PC-3 (cell line): ENCODE measurements at regions of chr1 and their contacts with region 1.

Region 1: DNA sequence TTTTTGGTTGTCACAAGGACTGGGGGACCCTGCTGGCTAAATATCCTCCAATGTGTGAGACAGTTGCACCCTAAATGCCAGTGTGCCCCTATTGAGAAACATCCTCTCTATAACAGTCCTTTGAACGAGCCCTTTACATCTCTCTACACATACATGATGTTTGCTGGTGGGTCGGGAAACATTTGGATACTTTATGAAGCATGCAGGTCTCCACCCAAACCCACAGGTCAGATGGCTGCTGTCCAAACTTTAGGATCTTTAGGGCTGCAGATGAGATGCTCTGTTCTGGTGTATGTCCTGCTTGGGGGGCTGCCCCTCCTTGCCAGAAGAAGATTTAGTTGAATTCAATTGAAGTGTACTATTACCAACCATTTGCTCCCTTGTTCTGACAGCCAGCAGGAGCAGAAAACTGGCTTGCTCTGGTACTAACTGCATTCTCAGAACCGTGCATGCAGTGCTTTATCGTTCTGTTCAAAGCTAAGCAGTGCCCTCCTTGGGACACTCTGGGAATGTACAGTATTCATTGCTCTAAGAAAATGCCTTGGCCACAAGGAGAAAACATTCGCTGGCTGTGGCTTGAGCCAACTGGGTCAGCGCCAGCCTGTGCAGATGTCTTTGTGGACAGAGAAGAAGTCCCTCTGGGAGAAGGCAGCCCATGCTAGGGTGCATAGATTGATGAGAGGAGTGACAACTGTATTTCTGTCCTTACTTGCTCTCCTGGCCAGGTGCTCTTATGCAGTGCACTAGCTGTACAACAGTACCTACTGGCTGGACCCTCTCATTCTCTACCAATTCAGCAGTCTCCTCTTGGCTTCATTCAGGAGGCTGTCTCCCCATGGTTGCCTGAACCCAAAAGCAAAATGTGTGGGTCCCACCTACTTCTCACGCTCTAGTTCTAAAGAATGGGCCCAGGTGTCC is 61.4 kb upstream of the DIRAS3 start:
- DNase-seq: peak; percentile 79
- ATAC-seq: peak; percentile 72
- H3K4me3 ChIP-seq: no peak overlapping the region
- H3K27ac ChIP-seq: no peak overlapping the region
- H3K4me1 ChIP-seq: peaks cover 29% of the 10 kb centered on the region
- H3K27me3 ChIP-seq: no peaks in the 10 kb centered on the region
- CTCF ChIP-seq: peak; percentile 88

Region 2: DNA sequence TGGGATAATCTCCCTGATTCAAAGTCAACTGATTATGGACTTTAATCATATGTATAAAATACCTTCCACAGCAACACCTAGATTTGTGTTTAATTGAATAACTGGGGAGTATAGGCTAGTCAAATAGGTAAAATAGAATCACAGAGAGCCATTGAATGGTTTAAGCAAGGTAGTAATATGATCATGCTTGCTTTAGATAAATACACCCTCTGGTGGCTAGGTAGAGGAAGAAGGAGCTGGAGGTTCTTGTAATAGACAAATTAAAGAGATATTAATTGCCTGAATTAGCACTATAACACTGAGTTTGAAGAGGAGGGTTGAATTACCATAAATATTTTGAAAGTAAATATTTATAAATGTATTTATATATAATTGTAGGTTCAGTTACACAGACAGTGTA is 101.7 kb before region 1 on chr1:
- CTCF ChIA-PET with region 1: interaction called, 4 read pairs
- POLR2A ChIA-PET with region 1: no interaction called
- intact Hi-C with region 1: loop called (anchors 2 kb)
- DNase-seq: peak; percentile 53
- ATAC-seq: peak; percentile 82
- H3K4me3 ChIP-seq: no peak overlapping the region
- H3K27ac ChIP-seq: no peak overlapping the region
- H3K4me1 ChIP-seq: no peaks in the 10 kb centered on the region
- H3K27me3 ChIP-seq: no peaks in the 10 kb centered on the region
- CTCF ChIP-seq: peak; percentile 73

Region 3: GRCh38 chr1:68057564-68057963 is 54.2 kb before region 1 on chr1:
- CTCF ChIA-PET with region 1: no interaction called
- POLR2A ChIA-PET with region 1: no interaction called
- intact Hi-C with region 1: no loop called
- DNase-seq: no peak
- ATAC-seq: no peak
- H3K4me3 ChIP-seq: no peak overlapping the region
- H3K27ac ChIP-seq: no peak overlapping the region
- H3K4me1 ChIP-seq: no peaks in the 10 kb centered on the region
- H3K27me3 ChIP-seq: no peaks in the 10 kb centered on the region
- CTCF ChIP-seq: no peak

Region 4: DNA sequence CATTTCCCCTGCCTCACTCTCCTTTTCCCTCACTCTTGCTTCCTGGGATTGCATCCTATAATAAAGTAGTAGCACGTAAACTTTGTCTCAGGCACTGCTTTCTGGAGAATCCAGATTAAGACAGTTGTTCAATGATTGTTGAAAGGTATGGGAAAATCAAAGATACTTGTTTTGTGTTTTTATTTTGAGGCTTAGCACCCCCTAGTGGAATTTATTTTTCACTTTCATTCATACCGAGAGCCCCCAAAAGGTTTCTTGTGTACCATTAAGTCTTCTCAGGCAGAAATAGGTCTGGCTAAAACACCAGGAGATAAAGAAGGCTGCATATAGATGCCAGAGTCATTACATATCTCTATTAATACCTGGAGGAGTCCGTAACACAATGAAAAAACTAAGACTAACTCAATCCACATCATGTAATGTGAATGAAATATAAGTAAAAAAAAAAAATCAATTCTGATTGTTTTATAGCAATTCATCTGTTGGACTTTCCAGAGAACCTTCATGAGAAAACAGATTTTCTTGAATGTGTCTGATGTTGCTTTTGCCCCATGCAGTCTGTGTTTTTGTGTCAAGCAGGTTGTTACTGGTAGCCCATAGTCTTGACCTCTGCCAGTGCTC is 234.5 kb after region 1 on chr1:
- CTCF ChIA-PET with region 1: interaction called, 4 read pairs
- POLR2A ChIA-PET with region 1: no interaction called
- intact Hi-C with region 1: loop called (anchors 1 kb)
- DNase-seq: peak; percentile 58
- ATAC-seq: 0 out of 2 replicates have a peak, but pooled peaks have one; percentile 22
- H3K4me3 ChIP-seq: no peak overlapping the region
- H3K27ac ChIP-seq: no peak overlapping the region
- H3K4me1 ChIP-seq: no peaks in the 10 kb centered on the region
- H3K27me3 ChIP-seq: 0 out of 2 replicates have a peak, but pooled peaks cover 4% of the 10 kb centered on the region
- CTCF ChIP-seq: peak; percentile 80